ENCODE measurements at regions of chr14 and their contacts with region 1.

Region 1: GRCh38 chr14:55301437-55302121 is 30.4 kb downstream of the FBXO34 start:
- DNase-seq: peak; percentile 21
- H3K4me3 Mint-ChIP-seq: no peak overlapping the region
- H3K27ac Mint-ChIP-seq: peak overlapping the region; percentile 1
- H3K4me1 Mint-ChIP-seq: peaks cover 69% of the 10 kb centered on the region
- H3K27me3 Mint-ChIP-seq: no peaks in the 10 kb centered on the region

Region 2: DNA sequence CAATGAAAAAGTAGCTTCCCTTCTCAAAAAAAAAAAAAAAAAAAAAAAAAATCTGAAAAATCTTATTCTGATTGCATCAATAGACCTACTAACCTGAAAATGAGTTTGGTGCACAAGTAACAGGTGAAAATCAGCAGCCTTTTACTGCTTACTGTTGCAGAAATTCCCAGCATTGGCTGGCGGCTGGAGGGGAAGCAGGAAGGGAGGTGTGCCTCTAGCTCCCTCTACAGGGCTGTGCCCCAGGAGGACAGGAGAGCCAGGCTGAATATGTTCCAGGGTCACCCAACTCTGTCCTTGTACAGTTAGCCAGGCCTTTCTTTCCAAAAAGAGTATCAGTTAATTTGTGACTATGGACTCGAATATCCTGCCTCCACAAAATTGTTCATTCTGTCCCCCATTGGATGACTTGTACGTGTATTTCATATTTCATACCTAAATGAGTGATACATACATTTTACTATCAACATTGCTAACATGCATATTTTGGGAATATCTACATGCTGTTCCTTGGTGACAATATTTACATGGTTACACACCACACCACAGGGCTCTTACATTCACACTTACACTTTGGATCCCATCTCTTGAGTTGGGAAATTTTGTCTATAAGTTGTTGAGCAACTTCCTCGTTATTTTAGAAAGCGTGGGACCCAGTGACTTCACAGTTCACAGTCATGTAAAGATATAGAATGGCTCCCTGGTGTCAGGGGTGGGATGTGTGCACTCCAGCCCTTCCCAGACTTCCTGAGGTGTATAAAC is 609.9 kb before region 1 on chr14:
- CTCF ChIA-PET with region 1: no interaction called
- POLR2A ChIA-PET with region 1: no interaction called
- intact Hi-C with region 1: no loop called
- DNase-seq: peak; percentile 75
- H3K4me3 Mint-ChIP-seq: no peak overlapping the region
- H3K27ac Mint-ChIP-seq: no peak overlapping the region
- H3K4me1 Mint-ChIP-seq: peaks cover 15% of the 10 kb centered on the region
- H3K27me3 Mint-ChIP-seq: peaks cover 8% of the 10 kb centered on the region

Region 3: GRCh38 chr14:55000381-55000780 is 301.2 kb before region 1 on chr14:
- CTCF ChIA-PET with region 1: no interaction called
- POLR2A ChIA-PET with region 1: no interaction called
- intact Hi-C with region 1: no loop called
- DNase-seq: no peak
- H3K4me3 Mint-ChIP-seq: no peak overlapping the region
- H3K27ac Mint-ChIP-seq: no peak overlapping the region
- H3K4me1 Mint-ChIP-seq: no peaks in the 10 kb centered on the region
- H3K27me3 Mint-ChIP-seq: no peaks in the 10 kb centered on the region

Region 4: GRCh38 chr14:55288439-55288838 is 13.1 kb before region 1 on chr14:
- CTCF ChIA-PET with region 1: no interaction called
- POLR2A ChIA-PET with region 1: no interaction called
- intact Hi-C with region 1: loop called (anchors 2 kb)
- DNase-seq: no peak
- H3K4me3 Mint-ChIP-seq: no peak overlapping the region
- H3K27ac Mint-ChIP-seq: peak overlapping the region; percentile 54
- H3K4me1 Mint-ChIP-seq: peaks cover 32% of the 10 kb centered on the region
- H3K27me3 Mint-ChIP-seq: no peaks in the 10 kb centered on the region

Region 5: DNA sequence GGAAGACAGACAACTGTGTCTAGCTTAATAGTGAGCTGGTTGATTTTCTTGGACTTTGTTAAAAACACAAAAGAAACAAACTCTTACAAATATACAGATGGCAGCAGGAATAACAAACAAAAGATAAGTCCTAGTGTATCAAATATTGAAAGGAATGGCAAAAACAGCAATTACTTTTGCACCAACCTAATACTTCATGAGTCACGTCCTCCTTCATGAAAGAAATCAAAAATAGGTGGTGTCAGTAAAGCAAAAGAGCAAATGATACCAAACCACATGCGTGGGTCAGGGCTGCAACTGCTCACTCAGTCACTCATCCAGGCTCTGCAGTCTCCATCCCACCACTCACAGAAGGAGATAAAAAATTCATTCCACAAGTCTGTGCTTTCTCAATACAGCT is 98.3 kb after region 1 on chr14:
- CTCF ChIA-PET with region 1: no interaction called
- POLR2A ChIA-PET with region 1: no interaction called
- intact Hi-C with region 1: no loop called
- DNase-seq: no peak
- H3K4me3 Mint-ChIP-seq: no peak overlapping the region
- H3K27ac Mint-ChIP-seq: no peak overlapping the region
- H3K4me1 Mint-ChIP-seq: peaks cover 42% of the 10 kb centered on the region
- H3K27me3 Mint-ChIP-seq: no peaks in the 10 kb centered on the region